ENCODE measurements at regions of chr10 and their contacts with region 1.

Region 1: GRCh38 chr10:30783939-30784500 is 154.5 kb upstream of the LYZL2 start:
- DNase-seq: peak; percentile 89
- H3K4me3 ChIP-seq: no peak overlapping the region
- H3K27ac ChIP-seq: peak overlapping the region; percentile 92
- H3K4me1 ChIP-seq: peaks cover 40% of the 10 kb centered on the region
- H3K27me3 ChIP-seq: no peaks in the 10 kb centered on the region
- CTCF ChIP-seq: peak; percentile 92
- POLR2A ChIP-seq: peak; percentile 56

Region 2: GRCh38 chr10:29987471-29987870 is 796.5 kb before region 1 on chr10:
- CTCF ChIA-PET with region 1: no interaction called
- POLR2A ChIA-PET with region 1: no interaction called
- dilution Hi-C with region 1: no loop called
- intact Hi-C with region 1: no loop called
- DNase-seq: no peak
- H3K4me3 ChIP-seq: no peak overlapping the region
- H3K27ac ChIP-seq: no peak overlapping the region
- H3K4me1 ChIP-seq: no peaks in the 10 kb centered on the region
- H3K27me3 ChIP-seq: peaks cover 0 to 14% of the 10 kb centered on the region in 2 experiments
- CTCF ChIP-seq: no peak
- POLR2A ChIP-seq: no peak

Region 3: DNA sequence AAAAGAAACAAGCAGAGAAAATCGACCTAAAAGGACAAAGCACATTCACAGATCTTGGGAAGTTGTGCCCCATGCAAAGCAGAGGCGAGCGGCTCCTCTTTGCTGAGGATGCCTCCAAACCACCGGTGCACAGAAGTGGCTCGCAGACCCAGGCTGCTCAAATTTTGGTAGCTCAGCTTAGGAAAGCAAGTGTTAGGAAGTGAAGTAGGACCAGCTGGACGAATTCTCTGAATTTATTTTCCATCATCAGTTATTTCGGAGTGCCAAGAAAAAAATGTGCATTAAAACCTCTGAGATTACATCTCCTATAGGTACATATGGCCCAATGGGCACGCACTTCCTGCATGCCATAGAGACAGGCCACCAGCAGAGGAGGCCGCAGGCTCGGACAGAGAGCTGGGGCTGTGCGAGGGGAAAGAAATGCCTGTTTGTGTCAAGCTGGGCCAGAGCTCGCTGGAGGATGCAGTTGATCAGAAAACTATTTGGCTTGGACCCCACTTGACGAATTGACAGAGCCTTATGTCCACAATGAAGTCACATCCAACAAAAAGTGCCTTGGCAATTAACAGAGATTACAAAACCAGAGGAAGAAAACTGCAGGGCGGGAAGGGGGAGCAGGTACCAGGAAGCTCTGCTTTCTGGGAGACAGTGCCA is 32.2 kb before region 1 on chr10:
- CTCF ChIA-PET with region 1: interaction called, 12 read pairs
- POLR2A ChIA-PET with region 1: no interaction called
- dilution Hi-C with region 1: no loop called
- intact Hi-C with region 1: no loop called
- DNase-seq: peak; percentile 76
- H3K4me3 ChIP-seq: no peak overlapping the region
- H3K27ac ChIP-seq: no peak overlapping the region
- H3K4me1 ChIP-seq: peaks cover 5% of the 10 kb centered on the region
- H3K27me3 ChIP-seq: no peaks in the 10 kb centered on the region
- CTCF ChIP-seq: peak; percentile 90 to 98
- POLR2A ChIP-seq: no peak

Region 4: GRCh38 chr10:30857803-30858202 is 73.8 kb after region 1 on chr10:
- CTCF ChIA-PET with region 1: interaction called, 18 read pairs
- POLR2A ChIA-PET with region 1: no interaction called
- dilution Hi-C with region 1: no loop called
- intact Hi-C with region 1: loop called (anchors 1 kb)
- DNase-seq: peak; percentile 50
- H3K4me3 ChIP-seq: no peak overlapping the region
- H3K27ac ChIP-seq: peak overlapping the region; percentile 97
- H3K4me1 ChIP-seq: peaks cover 63% of the 10 kb centered on the region
- H3K27me3 ChIP-seq: no peaks in the 10 kb centered on the region
- CTCF ChIP-seq: no peak
- POLR2A ChIP-seq: no peak

Region 5: DNA sequence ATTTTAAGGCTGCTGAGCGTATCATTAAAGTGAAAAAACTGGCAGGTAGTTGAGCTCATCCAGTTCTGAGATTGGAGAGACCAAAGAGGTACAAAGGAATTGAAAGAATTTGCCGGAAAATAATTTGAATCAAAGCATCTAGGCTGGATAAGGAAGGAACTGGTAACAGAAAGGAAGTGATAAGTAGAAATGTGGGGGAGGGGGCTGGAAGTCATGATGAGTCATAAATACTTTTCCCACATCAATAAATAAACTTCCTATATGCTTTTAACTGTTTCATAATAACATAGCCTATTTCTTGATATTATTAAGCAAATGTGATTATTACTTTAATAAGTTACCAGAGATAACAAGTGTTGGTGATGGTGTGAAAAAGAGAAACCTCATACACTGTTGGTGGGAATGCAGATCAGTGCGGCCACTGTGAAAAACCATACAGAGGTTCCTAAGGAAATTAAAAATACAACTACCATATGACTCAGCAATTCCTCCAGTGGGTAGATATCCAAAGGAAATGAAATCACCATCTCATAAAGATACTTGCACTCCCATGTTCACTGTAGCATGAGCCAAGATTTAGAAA is 220.7 kb after region 1 on chr10:
- CTCF ChIA-PET with region 1: interaction called, 12 read pairs
- POLR2A ChIA-PET with region 1: interaction called, 3 read pairs
- dilution Hi-C with region 1: no loop called
- intact Hi-C with region 1: loop called (anchors 1 kb)
- DNase-seq: peak; percentile 97
- H3K4me3 ChIP-seq: peak overlapping the region in 1 of 3 experiments; percentile 11
- H3K27ac ChIP-seq: peak overlapping the region; percentile 95
- H3K4me1 ChIP-seq: peaks cover 70% of the 10 kb centered on the region
- H3K27me3 ChIP-seq: no peaks in the 10 kb centered on the region
- CTCF ChIP-seq: no peak
- POLR2A ChIP-seq: peak; percentile 67

Region 6: DNA sequence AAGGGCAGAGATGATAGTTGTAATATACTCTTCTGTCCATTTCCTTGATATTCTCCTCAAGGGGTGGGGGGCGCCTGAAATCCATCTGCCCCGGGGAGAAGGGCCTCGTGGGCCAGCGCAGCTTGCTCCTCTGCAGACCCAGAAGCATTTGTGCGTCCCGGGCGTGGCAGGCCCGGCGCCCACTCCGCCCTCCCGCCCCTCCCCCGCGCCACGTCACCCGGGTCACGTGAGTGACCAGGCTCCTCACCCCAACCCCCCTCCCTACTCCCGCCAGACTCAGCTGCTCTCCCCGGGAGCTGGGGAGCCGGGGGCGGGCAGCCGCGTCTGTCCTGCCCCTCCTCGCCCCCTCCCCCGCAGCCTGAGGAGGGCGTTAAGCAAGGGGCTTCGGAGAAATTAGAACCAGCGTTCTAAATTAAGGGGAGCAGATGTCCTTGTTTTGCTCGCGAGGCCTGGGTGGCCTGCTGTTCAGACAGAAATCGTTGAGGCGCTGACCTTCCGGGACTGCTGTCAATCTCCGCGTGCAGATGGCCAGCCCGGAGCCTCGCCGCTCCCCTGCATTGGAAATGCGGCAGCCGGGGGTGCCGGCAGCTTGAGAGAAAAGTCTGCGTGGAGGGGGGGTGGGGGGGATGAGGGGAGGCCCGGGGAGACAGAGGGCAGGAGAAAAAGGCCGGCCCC is 349.7 kb after region 1 on chr10:
- CTCF ChIA-PET with region 1: interaction called, 3 read pairs
- POLR2A ChIA-PET with region 1: no interaction called
- dilution Hi-C with region 1: no loop called
- intact Hi-C with region 1: loop called (anchors 1 kb)
- DNase-seq: peak; percentile 58
- H3K4me3 ChIP-seq: peak overlapping the region in 2 of 3 experiments; percentile 3 to 19
- H3K27ac ChIP-seq: peak overlapping the region; percentile 96
- H3K4me1 ChIP-seq: peaks cover 21% of the 10 kb centered on the region
- H3K27me3 ChIP-seq: no peaks in the 10 kb centered on the region
- CTCF ChIP-seq: no peak
- POLR2A ChIP-seq: no peak

Region 7: DNA sequence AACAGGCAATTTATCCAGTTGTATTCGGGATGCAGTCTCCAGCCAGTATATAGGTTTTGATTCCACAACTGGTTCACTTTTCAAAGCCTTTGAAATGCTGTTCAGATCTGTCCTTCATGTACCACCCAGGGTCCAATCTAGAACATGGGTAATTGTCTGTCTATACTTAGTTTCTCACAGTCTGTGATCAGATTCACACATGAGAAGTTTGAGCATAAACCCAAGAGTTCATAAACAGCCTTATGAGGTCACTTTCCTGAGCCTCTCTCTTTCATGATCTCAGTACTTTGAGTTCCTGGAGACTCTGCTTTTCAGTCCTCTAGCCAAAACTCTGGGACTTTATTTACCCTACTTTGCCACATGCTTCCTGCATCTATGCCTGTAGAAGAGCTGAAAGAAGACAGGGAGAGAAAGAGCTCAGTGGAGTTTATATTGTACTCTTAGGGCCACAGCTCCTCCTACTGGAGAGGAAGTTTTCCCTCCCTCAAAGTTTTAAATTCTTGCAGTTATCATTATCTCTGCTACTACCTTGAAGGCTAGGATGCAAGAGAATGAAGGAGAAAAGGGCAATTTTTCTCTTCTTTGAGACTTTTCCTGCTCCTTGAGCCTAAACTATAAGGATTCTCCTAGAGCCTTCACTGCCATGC is 707.0 kb after region 1 on chr10:
- CTCF ChIA-PET with region 1: interaction called, 27 read pairs
- POLR2A ChIA-PET with region 1: no interaction called
- dilution Hi-C with region 1: no loop called
- intact Hi-C with region 1: loop called (anchors 1 kb)
- DNase-seq: peak; percentile 63
- H3K4me3 ChIP-seq: no peak overlapping the region
- H3K27ac ChIP-seq: peak overlapping the region; percentile 7
- H3K4me1 ChIP-seq: peaks cover 13% of the 10 kb centered on the region
- H3K27me3 ChIP-seq: no peaks in the 10 kb centered on the region
- CTCF ChIP-seq: peak; percentile 50 to 53
- POLR2A ChIP-seq: no peak

Region 8: GRCh38 chr10:31808258-31809218 is 1024.5 kb after region 1 on chr10:
- CTCF ChIA-PET with region 1: interaction called, 10 read pairs
- POLR2A ChIA-PET with region 1: no interaction called
- dilution Hi-C with region 1: no loop called
- intact Hi-C with region 1: loop called (anchors 1 kb)
- DNase-seq: peak; percentile 81
- H3K4me3 ChIP-seq: no peak overlapping the region
- H3K27ac ChIP-seq: peak overlapping the region; percentile 69
- H3K4me1 ChIP-seq: peaks cover 4% of the 10 kb centered on the region
- H3K27me3 ChIP-seq: no peaks in the 10 kb centered on the region
- CTCF ChIP-seq: peak; percentile 10 to 27
- POLR2A ChIP-seq: no peak